ENCODE measurements at regions of chr4 and their contacts with region 1.

Region 1: DNA sequence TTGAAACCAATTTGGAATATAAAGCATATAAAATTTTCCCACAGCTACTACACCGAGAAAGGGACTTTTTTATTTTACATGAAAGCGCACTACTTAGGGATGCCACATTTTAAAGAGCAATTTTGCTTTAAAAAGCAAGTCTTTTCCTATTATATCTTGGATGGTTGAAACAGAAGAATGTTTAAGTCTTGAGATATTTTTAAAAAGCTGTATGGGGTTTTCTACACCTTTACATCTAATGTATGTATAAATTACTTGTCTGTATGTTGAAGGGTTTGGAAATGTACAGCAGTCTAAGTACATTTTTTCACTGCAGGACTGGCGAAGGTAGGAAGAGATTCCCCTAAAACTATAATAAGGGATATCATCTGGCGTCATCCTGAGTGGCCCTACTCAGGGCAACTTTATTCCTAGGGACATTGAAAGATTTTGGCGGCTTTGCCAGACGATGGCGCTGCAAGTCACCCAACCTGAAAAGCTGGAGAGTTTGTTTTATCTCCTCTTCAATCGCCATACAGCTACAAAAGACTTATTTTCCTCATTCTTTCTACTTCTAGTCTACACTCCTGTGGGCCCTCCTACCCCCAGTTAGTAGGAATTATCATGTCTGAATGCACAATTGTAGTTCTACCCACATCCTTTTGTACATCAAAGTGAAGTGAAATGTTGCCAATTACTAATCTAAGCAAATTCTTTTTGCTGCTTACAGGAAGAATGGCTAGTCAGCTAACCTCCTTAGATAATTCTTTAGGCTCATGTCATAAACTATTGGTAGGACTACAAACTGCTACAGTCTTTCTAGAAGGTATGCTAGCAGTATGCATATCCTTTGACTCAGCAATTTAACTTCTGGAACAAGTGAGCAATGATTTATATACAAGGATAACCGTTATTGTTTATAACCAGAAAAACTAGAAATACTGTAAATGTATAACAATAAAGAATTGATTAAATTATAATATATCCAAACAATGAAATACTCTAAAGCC is 782 bp upstream of the NEK1 start:
- DNase-seq: peak; percentile 61 to 78 (median 76)
- H3K4me3 ChIP-seq: peak overlapping the region; percentile 94 to 97 (median 95)
- H3K4me3 Mint-ChIP-seq: peak overlapping the region; percentile 89 to 98
- H3K27ac ChIP-seq: peak overlapping the region; percentile 98 to 99
- H3K27ac Mint-ChIP-seq: peak overlapping the region; percentile 99 to 100 (median 99)
- H3K4me1 ChIP-seq: peaks cover 8 to 15% of the 10 kb centered on the region in 2 donors
- H3K4me1 Mint-ChIP-seq: peaks cover 11% of the 10 kb centered on the region
- H3K27me3 ChIP-seq: no peaks in the 10 kb centered on the region
- H3K27me3 Mint-ChIP-seq: peaks cover 0 to 5% (median 3%) of the 10 kb centered on the region in 3 donors
- CTCF ChIP-seq: peak; percentile 83

Region 2: GRCh38 chr4:169659716-169660670 is 46.8 kb after region 1 on chr4:
- intact Hi-C with region 1: loop called in 1 of 2 experiments (anchors 5 kb)
- DNase-seq: peak; percentile 93 to 99 (median 99)
- H3K4me3 ChIP-seq: peak overlapping the region; percentile 17 to 85 (median 72)
- H3K4me3 Mint-ChIP-seq: peak overlapping the region; percentile 62 to 69
- H3K27ac ChIP-seq: peak overlapping the region in 1 of 2 donors; percentile 82
- H3K27ac Mint-ChIP-seq: peak overlapping the region; percentile 87 to 96 (median 95)
- H3K4me1 ChIP-seq: peaks cover 11 to 18% of the 10 kb centered on the region in 2 donors
- H3K4me1 Mint-ChIP-seq: peaks cover 17% of the 10 kb centered on the region
- H3K27me3 ChIP-seq: no peaks in the 10 kb centered on the region
- H3K27me3 Mint-ChIP-seq: no peaks in the 10 kb centered on the region
- CTCF ChIP-seq: no peak